HepG2 (cell line): ENCODE measurements at regions of chr11 and their contacts with region 1.

Region 1: GRCh38 chr11:63916837-63917691 is at the start of gene RCOR2:
- DNase-seq: peak; percentile 70
- ATAC-seq: peak; percentile 0
- H3K4me3 ChIP-seq: peak within 1 kb of the TSS; percentile 64 to 84 (median 76)
- H3K27ac ChIP-seq: peak within 1 kb of the TSS; percentile 82
- H3K4me1 ChIP-seq: peaks cover 48% of the 10 kb centered on the region
- H3K27me3 ChIP-seq: no peaks in the 10 kb centered on the region; a peak in 2 of 5 replicates
- CTCF ChIP-seq: 0 out of 2 replicates have a peak, but pooled peaks have one; percentile 1
- EP300 ChIP-seq: no peak
- POLR2A ChIP-seq: no peak
- RAD21 ChIP-seq: no peak
- total RNA-seq, gene RCOR2: 6.9 and 8.5 TPM in 2 replicates

Region 2: GRCh38 chr11:63888170-63889086 is 28.6 kb before region 1 on chr11:
- CTCF ChIA-PET with region 1: no interaction called
- POLR2A ChIA-PET with region 1: interaction called, 10 read pairs
- in situ Hi-C with region 1: no loop called
- intact Hi-C with region 1: no loop called
- DNase-seq: peak; percentile 81
- ATAC-seq: peak; percentile 93
- H3K4me3 ChIP-seq: peak overlapping the region; percentile 46 to 79 (median 53)
- H3K27ac ChIP-seq: peak overlapping the region; percentile 92
- H3K4me1 ChIP-seq: peaks cover 41% of the 10 kb centered on the region
- H3K27me3 ChIP-seq: no peaks in the 10 kb centered on the region
- CTCF ChIP-seq: peak; percentile 26
- EP300 ChIP-seq: no peak
- POLR2A ChIP-seq: peak; percentile 71 to 87
- RAD21 ChIP-seq: peak; percentile 60; the same call in 1 of the 2 replicates

Region 3: GRCh38 chr11:63938479-63939396 is 21.7 kb after region 1 on chr11 and contains the start of gene NAA40:
- CTCF ChIA-PET with region 1: no interaction called
- POLR2A ChIA-PET with region 1: interaction called, 10 read pairs
- in situ Hi-C with region 1: no loop called
- intact Hi-C with region 1: loop called (anchors 2 kb)
- DNase-seq: peak; percentile 92
- ATAC-seq: peak; percentile 93
- H3K4me3 ChIP-seq: peak within 1 kb of the TSS; percentile 78 to 94 (median 82)
- H3K27ac ChIP-seq: peak within 1 kb of the TSS; percentile 70
- H3K4me1 ChIP-seq: peaks cover 41% of the 10 kb centered on the region
- H3K27me3 ChIP-seq: no peaks in the 10 kb centered on the region; a peak in 1 of 5 replicates
- CTCF ChIP-seq: peak; percentile 50
- EP300 ChIP-seq: 0 out of 4 replicates have a peak, but pooled peaks of 1 of the 2 experiments have one; percentile 20
- POLR2A ChIP-seq: peak; percentile 45 to 63; a peak in 3 of 4 replicates
- RAD21 ChIP-seq: no peak
- total RNA-seq, gene NAA40: 17.1 and 17.9 TPM in 2 replicates

Region 4: DNA sequence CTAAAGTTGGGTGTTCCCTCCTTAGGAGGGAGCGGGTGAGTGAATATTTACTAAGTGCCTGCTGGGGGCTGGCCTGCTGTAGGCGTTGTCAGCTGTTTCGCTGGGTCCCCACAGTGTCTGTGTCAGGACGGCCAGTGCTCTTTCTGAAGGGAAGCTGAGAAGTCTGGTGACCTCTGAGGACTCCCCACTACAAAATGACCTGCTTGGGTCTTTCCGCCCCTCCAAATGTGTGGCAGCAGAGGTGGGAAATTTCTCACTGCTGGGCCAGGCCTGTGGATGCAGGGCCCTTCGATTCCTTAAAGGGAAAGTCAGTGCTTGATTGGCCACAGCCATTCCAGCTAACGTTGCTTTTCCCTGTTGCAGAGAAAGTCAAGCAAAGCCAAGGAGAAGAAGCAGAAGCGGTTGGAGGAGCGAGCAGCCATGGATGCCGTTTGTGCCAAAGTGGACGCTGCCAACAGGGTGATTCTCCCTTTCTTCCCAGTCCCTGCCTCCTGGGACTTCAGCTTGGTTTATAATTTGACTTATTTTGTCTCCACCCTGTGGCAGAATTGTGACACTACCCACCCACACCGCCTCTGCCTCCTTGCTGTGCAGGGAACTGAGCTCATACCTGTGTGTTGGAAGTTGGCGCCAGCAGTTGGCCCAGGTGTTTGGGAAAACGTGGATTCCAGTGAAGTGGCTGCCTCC is 28.6 kb after region 1 on chr11:
- CTCF ChIA-PET with region 1: interaction called, 4 read pairs
- POLR2A ChIA-PET with region 1: interaction called, 12 read pairs
- in situ Hi-C with region 1: no loop called
- intact Hi-C with region 1: no loop called
- DNase-seq: peak; percentile 62
- ATAC-seq: peak; percentile 94
- H3K4me3 ChIP-seq: 0 out of 6 replicates have a peak overlapping the region, but pooled peaks of 1 of the 3 experiments have one; percentile 2
- H3K27ac ChIP-seq: peak overlapping the region; percentile 54
- H3K4me1 ChIP-seq: peaks cover 28% of the 10 kb centered on the region
- H3K27me3 ChIP-seq: no peaks in the 10 kb centered on the region
- CTCF ChIP-seq: peak; percentile 84
- EP300 ChIP-seq: no peak
- POLR2A ChIP-seq: no peak
- RAD21 ChIP-seq: peak; percentile 73

Region 5: DNA sequence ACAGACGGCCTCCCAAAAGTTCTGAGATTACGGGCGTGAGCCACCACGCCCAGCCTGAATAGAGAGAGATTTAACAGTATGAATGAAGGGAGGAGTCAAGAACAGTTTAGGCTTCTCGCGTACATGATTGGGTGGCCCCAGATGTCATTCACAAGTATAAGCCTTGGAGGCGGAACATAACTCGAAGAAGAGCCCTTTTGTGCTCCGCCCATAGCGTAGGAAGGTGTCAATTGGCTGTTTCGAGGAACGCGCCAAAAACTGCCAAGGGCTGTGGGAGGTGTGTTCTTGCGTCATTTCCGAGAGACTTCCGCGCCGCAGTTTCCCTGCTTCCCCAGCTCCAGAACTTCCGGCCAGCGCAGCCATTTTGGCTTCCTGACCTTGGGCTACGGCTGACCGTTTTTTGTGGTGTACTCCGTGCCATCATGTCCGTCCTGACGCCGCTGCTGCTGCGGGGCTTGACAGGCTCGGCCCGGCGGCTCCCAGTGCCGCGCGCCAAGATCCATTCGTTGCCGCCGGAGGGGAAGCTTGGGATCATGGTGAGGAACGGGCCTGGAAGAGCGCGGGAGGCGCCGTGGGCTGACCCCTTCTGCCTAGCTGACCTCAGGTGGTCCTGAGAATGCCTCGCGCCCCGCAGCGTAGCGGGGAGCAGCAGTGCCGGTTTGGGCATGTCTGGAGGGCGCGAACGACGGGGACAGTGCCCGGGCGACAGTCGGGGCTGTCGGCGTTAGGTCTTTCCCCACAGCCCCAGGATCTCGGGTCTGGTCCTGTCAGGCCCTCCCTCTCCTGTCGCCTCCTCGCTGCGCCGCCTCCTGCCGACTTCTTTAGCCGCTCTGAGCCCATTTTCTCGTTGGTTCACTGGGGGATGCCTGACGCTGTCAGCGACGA is 57.4 kb after region 1 on chr11 and contains the start of gene COX8A:
- CTCF ChIA-PET with region 1: no interaction called
- POLR2A ChIA-PET with region 1: interaction called, 7 read pairs
- in situ Hi-C with region 1: no loop called
- intact Hi-C with region 1: loop called (anchors 2 kb)
- DNase-seq: peak; percentile 99
- ATAC-seq: peak; percentile 93
- H3K4me3 ChIP-seq: peak within 1 kb of the TSS; percentile 87 to 93 (median 91)
- H3K27ac ChIP-seq: peak within 1 kb of the TSS; percentile 80
- H3K4me1 ChIP-seq: peaks cover 49% of the 10 kb centered on the region
- H3K27me3 ChIP-seq: peaks cover 0 to 1% of the 10 kb centered on the region in 2 experiments; a peak in 2 of 5 replicates
- CTCF ChIP-seq: peak; percentile 33
- EP300 ChIP-seq: peak in 1 of 2 experiments; percentile 29; a peak in 2 of 4 replicates
- POLR2A ChIP-seq: peak; percentile 78 to 88
- RAD21 ChIP-seq: peak; percentile 39; the same call in 1 of the 2 replicates
- total RNA-seq, gene COX8A: 393 and 406 TPM in 2 replicates